ENCODE measurements at regions of chr15 and their contacts with region 1.

Region 1: GRCh38 chr15:43492673-43493601 is at the start of gene TP53BP1:
- DNase-seq: peak; percentile 98 to 99
- ATAC-seq: peak; percentile 99
- H3K4me3 ChIP-seq: peak within 1 kb of the TSS; percentile 68 to 86
- H3K27ac ChIP-seq: peak within 1 kb of the TSS in 1 of 2 donors; percentile 53
- H3K4me1 ChIP-seq: no peaks in the 10 kb centered on the region
- H3K27me3 ChIP-seq: no peaks in the 10 kb centered on the region
- total RNA-seq, gene TP53BP1: 37.7 to 63.2 TPM

Region 2: DNA sequence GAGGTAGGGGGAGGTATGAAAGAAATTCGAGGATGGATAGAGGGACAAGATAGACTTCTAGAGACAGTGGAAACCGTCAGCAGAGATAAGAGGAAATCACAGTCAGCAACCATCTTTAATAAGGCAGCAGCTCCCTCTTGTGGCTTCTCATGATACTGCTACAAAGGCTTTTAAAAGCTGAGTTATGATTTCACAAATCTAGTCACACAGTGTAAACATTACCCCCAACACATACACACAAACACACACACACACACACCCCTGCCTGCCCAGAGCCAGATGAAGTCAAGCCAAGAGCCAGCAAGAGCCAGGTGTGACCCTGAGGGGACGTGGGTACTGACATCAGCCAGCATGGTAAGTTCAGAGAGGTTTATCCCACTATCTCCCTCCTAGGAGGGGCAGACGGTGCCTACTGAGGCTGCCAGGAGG is 207.3 kb before region 1 on chr15:
- intact Hi-C with region 1: no loop called
- DNase-seq: no peak
- ATAC-seq: peak; percentile 81
- H3K4me3 ChIP-seq: no peak overlapping the region
- H3K27ac ChIP-seq: no peak overlapping the region
- H3K4me1 ChIP-seq: no peaks in the 10 kb centered on the region
- H3K27me3 ChIP-seq: no peaks in the 10 kb centered on the region

Region 3: GRCh38 chr15:43510200-43511011 is 17.5 kb after region 1 on chr15:
- intact Hi-C with region 1: loop called in 1 of 2 experiments (anchors 1 kb)
- DNase-seq: peak; percentile 99 to 100
- ATAC-seq: peak; percentile 99
- H3K4me3 ChIP-seq: peak overlapping the region; percentile 48 to 79
- H3K27ac ChIP-seq: peak overlapping the region in 1 of 2 donors; percentile 62
- H3K4me1 ChIP-seq: peaks cover 2 to 3% of the 10 kb centered on the region in 2 donors
- H3K27me3 ChIP-seq: no peaks in the 10 kb centered on the region

Region 4: GRCh38 chr15:43517354-43518196 is 24.6 kb after region 1 on chr15 and contains the start of gene MAP1A:
- intact Hi-C with region 1: loop called in 1 of 2 experiments (anchors 2 kb)
- DNase-seq: peak; percentile 69 to 85
- ATAC-seq: peak; percentile 71
- H3K4me3 ChIP-seq: peak within 1 kb of the TSS; percentile 44 to 80
- H3K27ac ChIP-seq: peak within 1 kb of the TSS in 1 of 2 donors; percentile 65
- H3K4me1 ChIP-seq: no peaks in the 10 kb centered on the region
- H3K27me3 ChIP-seq: no peaks in the 10 kb centered on the region
- total RNA-seq, gene MAP1A: 36.4 to 49.3 TPM

Measured in aorta (tissue), 5 donors.